ENCODE measurements at regions of chr16 and their contacts with region 1.

Region 1: GRCh38 chr16:26905336-26905735 is 161.4 kb upstream of the C16orf82 start:
- DNase-seq: no peak
- H3K4me3 ChIP-seq: no peak overlapping the region
- H3K27ac ChIP-seq: no peak overlapping the region
- H3K4me1 ChIP-seq: no peaks in the 10 kb centered on the region
- H3K27me3 ChIP-seq: no peaks in the 10 kb centered on the region
- CTCF ChIP-seq: no peak
- EP300 ChIP-seq: no peak
- POLR2A ChIP-seq: no peak

Region 2: GRCh38 chr16:27169511-27170071 is 264.3 kb after region 1 on chr16:
- intact Hi-C with region 1: no loop called
- DNase-seq: no peak
- H3K4me3 ChIP-seq: no peak overlapping the region
- H3K27ac ChIP-seq: no peak overlapping the region
- H3K4me1 ChIP-seq: no peaks in the 10 kb centered on the region
- H3K27me3 ChIP-seq: no peaks in the 10 kb centered on the region
- CTCF ChIP-seq: no peak
- EP300 ChIP-seq: no peak
- POLR2A ChIP-seq: no peak

Region 3: DNA sequence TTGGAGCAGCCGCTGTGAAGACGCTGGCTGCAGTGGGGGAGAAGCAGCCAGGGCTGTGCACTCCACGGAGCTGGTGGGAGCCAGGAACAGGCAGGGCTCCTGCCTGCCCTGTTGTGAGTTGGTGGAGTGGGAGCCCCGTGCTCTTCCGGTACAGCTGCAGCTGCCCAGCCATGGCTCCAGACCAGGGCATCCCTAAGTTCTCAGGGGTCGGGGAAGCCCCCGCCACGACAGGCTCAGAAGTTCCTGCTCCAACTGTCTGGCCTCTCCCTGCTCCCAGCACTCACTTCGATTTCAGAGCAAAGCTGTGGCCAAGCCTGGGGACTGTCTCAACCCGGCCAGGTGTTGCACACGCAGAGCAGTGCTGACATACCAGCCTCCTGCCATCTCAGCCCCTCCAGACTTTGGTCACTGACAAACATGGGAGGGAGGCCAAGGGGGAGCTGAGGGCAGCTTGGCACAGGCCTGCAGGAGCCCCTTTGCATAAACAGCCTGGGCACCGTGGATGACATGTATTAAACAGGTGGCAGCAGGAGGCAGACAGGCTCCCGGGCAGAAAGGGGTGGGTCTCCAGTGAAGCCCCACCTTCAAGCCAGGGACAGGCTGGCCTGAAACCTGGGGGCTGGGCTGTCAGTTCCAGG is 284.1 kb after region 1 on chr16:
- intact Hi-C with region 1: no loop called
- DNase-seq: no peak
- H3K4me3 ChIP-seq: no peak overlapping the region
- H3K27ac ChIP-seq: no peak overlapping the region
- H3K4me1 ChIP-seq: no peaks in the 10 kb centered on the region
- H3K27me3 ChIP-seq: no peaks in the 10 kb centered on the region
- CTCF ChIP-seq: no peak
- EP300 ChIP-seq: no peak
- POLR2A ChIP-seq: no peak

Region 4: DNA sequence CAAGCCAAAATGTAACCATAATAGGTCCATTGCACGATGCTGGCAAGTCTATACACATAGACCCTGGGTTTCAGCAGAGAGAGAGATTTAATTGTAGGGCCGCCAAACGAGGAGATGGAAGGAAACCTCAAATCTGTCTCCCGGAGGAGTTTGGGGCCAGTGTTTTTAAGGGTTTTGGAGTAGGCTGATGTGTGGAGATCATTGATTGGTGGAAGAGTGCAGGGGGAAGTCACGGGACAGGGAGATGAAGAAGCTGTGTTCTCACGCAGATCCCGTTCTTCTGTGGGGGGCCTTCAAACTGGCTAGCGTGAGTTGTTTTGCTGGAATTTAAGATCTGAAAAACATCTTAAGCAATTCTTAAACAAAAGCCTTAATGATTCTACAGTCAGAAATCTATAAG is 729.4 kb after region 1 on chr16:
- intact Hi-C with region 1: loop called in 1 of 4 experiments (anchors 5 kb)
- DNase-seq: no peak
- H3K4me3 ChIP-seq: no peak overlapping the region
- H3K27ac ChIP-seq: no peak overlapping the region
- H3K4me1 ChIP-seq: peaks cover 1% of the 10 kb centered on the region
- H3K27me3 ChIP-seq: no peaks in the 10 kb centered on the region
- CTCF ChIP-seq: no peak
- EP300 ChIP-seq: no peak
- POLR2A ChIP-seq: no peak